Transverse colon (tissue), 4 donors: ENCODE measurements at regions of chr16 and their contacts with region 1.

Region 1: DNA sequence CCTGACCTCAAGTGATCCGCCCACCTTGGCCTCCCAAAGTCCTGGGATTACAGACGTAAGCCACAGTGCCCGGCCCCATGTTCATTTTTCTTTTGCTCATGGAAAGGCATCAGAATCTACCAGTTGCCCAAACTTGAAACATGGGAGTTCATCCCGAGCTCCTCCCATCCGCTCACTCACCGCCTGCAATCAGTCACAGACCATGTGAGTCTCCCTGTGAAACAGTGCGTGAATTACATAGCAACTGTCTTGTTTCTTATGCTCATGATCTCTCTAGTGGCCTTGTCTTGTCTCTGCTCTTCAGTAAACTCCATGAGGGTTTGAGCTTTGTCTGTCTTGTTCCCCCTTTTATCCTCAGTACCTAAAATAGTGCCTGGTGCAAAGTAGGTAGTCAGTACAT is 52.1 kb upstream of the TNRC6A start:
- DNase-seq: no peak
- H3K4me3 ChIP-seq: no peak overlapping the region
- H3K27ac ChIP-seq: no peak overlapping the region
- H3K4me1 ChIP-seq: no peaks in the 10 kb centered on the region
- H3K27me3 ChIP-seq: peaks cover under 1% of the 10 kb centered on the region
- CTCF ChIP-seq: no peak
- EP300 ChIP-seq: no peak
- POLR2A ChIP-seq: no peak

Region 2: GRCh38 chr16:23072084-23072599 is 1605.2 kb before region 1 on chr16:
- in situ Hi-C with region 1: no loop called
- intact Hi-C with region 1: no loop called
- DNase-seq: peak; percentile 84
- H3K4me3 ChIP-seq: no peak overlapping the region
- H3K27ac ChIP-seq: peak overlapping the region; percentile 48 to 68 (median 66)
- H3K4me1 ChIP-seq: peaks cover 0 to 15% (median 12%) of the 10 kb centered on the region in 4 donors
- H3K27me3 ChIP-seq: no peaks in the 10 kb centered on the region
- CTCF ChIP-seq: no peak
- EP300 ChIP-seq: no peak
- POLR2A ChIP-seq: no peak

Region 3: DNA sequence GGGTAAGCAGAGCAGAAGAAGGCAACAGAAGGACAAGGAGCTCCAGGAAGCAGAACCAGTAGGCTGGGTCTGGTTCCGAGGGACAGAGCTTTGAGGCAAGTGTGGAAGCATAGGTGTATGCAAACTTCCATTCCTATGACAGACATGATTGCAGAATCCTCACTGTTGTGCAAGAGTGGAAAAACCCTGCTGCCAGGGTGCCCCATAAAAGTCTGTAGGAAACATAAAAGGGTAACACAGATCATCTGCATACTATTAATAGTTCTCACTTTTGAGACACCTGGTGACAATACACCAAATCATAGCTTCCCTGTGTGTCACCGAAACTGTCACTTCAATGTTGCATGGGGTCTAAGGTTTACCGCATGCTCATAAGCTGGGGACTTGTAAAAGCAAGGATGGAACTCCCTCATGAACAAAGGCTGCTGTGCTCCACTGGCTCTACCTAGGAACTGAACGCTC is 298.1 kb after region 1 on chr16:
- in situ Hi-C with region 1: no loop called
- intact Hi-C with region 1: loop called (anchors 5 kb)
- DNase-seq: no peak
- H3K4me3 ChIP-seq: no peak overlapping the region
- H3K27ac ChIP-seq: no peak overlapping the region
- H3K4me1 ChIP-seq: peaks cover 3 to 43% (median 13%) of the 10 kb centered on the region in 4 donors
- H3K27me3 ChIP-seq: no peaks in the 10 kb centered on the region
- CTCF ChIP-seq: no peak
- EP300 ChIP-seq: no peak
- POLR2A ChIP-seq: no peak

Region 4: GRCh38 chr16:25713785-25714580 is 1036.6 kb after region 1 on chr16:
- in situ Hi-C with region 1: no loop called
- intact Hi-C with region 1: no loop called
- DNase-seq: no peak
- H3K4me3 ChIP-seq: no peak overlapping the region
- H3K27ac ChIP-seq: no peak overlapping the region
- H3K4me1 ChIP-seq: no peaks in the 10 kb centered on the region
- H3K27me3 ChIP-seq: peaks cover 4% of the 10 kb centered on the region
- CTCF ChIP-seq: no peak
- EP300 ChIP-seq: no peak
- POLR2A ChIP-seq: no peak